AG04449 (cell line): ENCODE measurements at regions of chr17 and their contacts with region 1.

Region 1: GRCh38 chr17:64635647-64636307 is 26.3 kb downstream of the SMURF2 start:
- DNase-seq: peak; percentile 63
- H3K4me3 ChIP-seq: no peak overlapping the region
- CTCF ChIP-seq: no peak

Region 2: DNA sequence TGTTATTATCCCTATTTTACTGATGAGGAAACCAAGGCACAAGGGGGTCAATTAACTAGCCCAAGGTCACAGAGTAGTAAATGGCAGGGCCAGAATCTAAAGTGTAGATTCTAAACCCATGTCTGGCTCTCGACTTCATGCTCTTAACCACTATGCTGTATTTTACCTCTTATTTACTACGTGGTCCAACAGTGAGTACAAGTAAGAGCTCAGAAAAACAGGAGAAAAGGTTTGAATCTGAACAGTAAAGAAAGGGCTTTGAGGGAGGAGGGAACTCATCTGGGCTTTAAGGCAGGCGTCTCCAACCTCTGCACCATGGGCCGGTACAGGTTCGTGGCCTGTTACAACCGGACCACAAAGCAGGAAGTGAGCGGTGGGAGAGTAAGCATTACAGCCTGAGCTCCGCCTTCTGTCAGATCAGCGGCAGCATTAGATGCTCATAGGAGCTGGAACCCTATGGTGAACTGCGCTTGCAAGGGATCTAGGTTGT is 36.5 kb before region 1 on chr17:
- CTCF ChIA-PET with region 1: no interaction called
- POLR2A ChIA-PET with region 1: no interaction called
- DNase-seq: no peak
- H3K4me3 ChIP-seq: no peak overlapping the region
- CTCF ChIP-seq: no peak

Region 3: GRCh38 chr17:64648234-64648633 is 12.5 kb after region 1 on chr17:
- CTCF ChIA-PET with region 1: interaction called, 18 read pairs
- POLR2A ChIA-PET with region 1: no interaction called
- DNase-seq: no peak
- H3K4me3 ChIP-seq: no peak overlapping the region
- CTCF ChIP-seq: no peak